ENCODE measurements at regions of chr7 and their contacts with region 1.

Region 1: GRCh38 chr7:131507592-131508331 is 48.7 kb downstream of the PODXL start:
- DNase-seq: peak; percentile 87
- ATAC-seq: peak; percentile 82
- H3K4me3 Mint-ChIP-seq: no peak overlapping the region
- H3K27ac Mint-ChIP-seq: no peak overlapping the region
- H3K4me1 Mint-ChIP-seq: peaks cover 25% of the 10 kb centered on the region
- H3K27me3 Mint-ChIP-seq: peaks cover 7% of the 10 kb centered on the region

Region 2: GRCh38 chr7:131249003-131249402 is 258.8 kb before region 1 on chr7:
- CTCF ChIA-PET with region 1: no interaction called
- POLR2A ChIA-PET with region 1: no interaction called
- DNase-seq: no peak
- ATAC-seq: no peak
- H3K4me3 Mint-ChIP-seq: no peak overlapping the region
- H3K27ac Mint-ChIP-seq: no peak overlapping the region
- H3K4me1 Mint-ChIP-seq: no peaks in the 10 kb centered on the region
- H3K27me3 Mint-ChIP-seq: peaks cover 6% of the 10 kb centered on the region

Region 3: DNA sequence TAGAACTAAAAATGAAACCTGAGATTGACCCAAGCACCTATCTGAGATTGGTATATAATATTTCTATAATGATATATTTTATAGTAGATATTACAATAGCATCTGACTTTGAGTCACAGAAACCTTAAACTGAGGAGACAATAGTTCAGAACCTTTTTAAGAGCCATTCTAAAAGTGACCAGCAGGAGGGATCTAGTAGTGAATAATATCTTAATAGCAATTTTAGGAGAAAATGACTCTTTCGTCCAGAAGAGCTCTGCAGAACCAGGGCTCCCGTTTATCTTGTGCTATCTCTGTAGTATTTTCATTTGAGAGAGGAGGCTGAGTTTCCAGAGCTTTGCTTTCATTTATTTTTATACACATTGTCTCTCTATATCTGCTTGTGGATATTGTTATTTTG is 19.4 kb before region 1 on chr7:
- CTCF ChIA-PET with region 1: interaction called, 11 read pairs
- POLR2A ChIA-PET with region 1: no interaction called
- DNase-seq: no peak
- ATAC-seq: no peak
- H3K4me3 Mint-ChIP-seq: no peak overlapping the region
- H3K27ac Mint-ChIP-seq: no peak overlapping the region
- H3K4me1 Mint-ChIP-seq: no peaks in the 10 kb centered on the region
- H3K27me3 Mint-ChIP-seq: no peaks in the 10 kb centered on the region

Region 4: GRCh38 chr7:131654668-131655326 is 147.0 kb after region 1 on chr7:
- CTCF ChIA-PET with region 1: interaction called, 10 read pairs
- POLR2A ChIA-PET with region 1: no interaction called
- DNase-seq: peak; percentile 88
- ATAC-seq: peak; percentile 97
- H3K4me3 Mint-ChIP-seq: no peak overlapping the region
- H3K27ac Mint-ChIP-seq: no peak overlapping the region
- H3K4me1 Mint-ChIP-seq: no peaks in the 10 kb centered on the region
- H3K27me3 Mint-ChIP-seq: no peaks in the 10 kb centered on the region

Region 5: GRCh38 chr7:131665021-131665420 is 157.3 kb after region 1 on chr7:
- CTCF ChIA-PET with region 1: no interaction called
- POLR2A ChIA-PET with region 1: no interaction called
- DNase-seq: no peak
- ATAC-seq: no peak
- H3K4me3 Mint-ChIP-seq: no peak overlapping the region
- H3K27ac Mint-ChIP-seq: no peak overlapping the region
- H3K4me1 Mint-ChIP-seq: no peaks in the 10 kb centered on the region
- H3K27me3 Mint-ChIP-seq: peaks cover 7% of the 10 kb centered on the region

Measured in activated CD8-positive, alpha-beta T cell treated with anti-CD3 and anti-CD28 coated beads, Interleukin-2, amount 10 ng/mL, durations not matched to agents 7 days and 5 days (primary cell).